ENCODE measurements at regions of chr11 and their contacts with region 1.

Region 1: DNA sequence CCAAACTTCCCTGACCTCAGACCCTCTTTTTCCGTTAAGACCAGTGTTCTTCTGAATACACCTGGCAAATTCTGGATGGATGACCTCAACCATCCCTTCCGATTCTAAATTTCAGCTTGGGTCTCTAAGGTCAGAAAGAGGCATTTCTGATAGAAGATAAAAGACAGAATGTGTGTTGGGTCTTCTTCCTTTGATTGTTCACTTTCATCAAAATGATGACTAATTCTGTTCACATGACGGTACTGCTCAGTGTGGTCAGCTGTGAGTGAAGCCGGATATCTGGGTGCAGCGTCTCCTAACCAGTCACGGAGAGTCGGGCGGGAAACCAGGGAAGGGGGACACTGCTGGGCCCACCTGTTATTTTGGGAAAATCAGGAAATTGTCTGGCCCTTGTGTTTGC is 151.6 kb upstream of the NAV2 start:
- DNase-seq: no peak
- ATAC-seq: no peak

Region 2: GRCh38 chr11:19742588-19743292 is 181.7 kb after region 1 on chr11:
- intact Hi-C with region 1: loop called (anchors 1 kb)
- DNase-seq: peak; percentile 76
- ATAC-seq: peak; percentile 87

Region 3: GRCh38 chr11:19800162-19800561 is 239.2 kb after region 1 on chr11:
- intact Hi-C with region 1: loop called (anchors 2 kb)
- DNase-seq: no peak
- ATAC-seq: no peak

Region 4: DNA sequence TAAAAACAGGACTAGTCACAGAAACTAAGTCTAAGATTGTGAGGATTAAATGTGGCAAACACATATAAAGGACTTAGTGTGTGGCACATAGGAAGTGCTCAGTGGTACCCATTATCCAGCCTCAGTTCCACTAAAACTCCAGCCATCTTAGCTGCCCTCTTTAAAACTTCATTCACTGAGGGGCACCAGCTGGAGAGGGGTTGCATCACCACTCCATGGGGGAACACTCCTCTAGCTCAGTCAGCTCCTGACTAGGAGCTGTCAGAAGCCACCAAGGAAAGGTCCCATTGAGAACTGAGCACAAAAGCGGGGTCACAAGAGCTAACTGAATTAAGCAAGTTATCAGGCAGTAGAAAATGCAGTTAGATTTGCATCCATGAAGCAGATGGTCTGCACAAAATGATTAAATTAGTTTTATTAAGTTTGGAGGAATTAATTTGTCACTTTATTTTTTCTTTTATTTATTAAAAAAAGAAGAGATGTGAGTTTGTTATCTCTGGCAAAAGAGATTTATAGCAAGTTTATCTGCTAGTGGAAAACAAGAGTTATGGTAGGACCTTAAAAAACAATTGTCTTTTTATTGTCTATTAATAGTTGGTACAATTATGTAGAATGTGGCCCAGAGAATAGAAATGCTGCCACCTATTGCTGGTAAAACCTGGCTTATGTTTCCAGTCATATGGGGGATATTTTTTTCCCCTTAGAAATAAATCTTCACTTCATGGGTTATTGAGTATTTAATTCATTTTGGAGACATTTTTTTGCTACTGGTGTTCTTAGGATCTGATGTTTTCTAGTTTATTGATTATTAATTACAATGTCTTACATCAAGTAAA is 247.3 kb after region 1 on chr11:
- intact Hi-C with region 1: loop called (anchors 2 kb)
- DNase-seq: no peak
- ATAC-seq: no peak

Region 5: DNA sequence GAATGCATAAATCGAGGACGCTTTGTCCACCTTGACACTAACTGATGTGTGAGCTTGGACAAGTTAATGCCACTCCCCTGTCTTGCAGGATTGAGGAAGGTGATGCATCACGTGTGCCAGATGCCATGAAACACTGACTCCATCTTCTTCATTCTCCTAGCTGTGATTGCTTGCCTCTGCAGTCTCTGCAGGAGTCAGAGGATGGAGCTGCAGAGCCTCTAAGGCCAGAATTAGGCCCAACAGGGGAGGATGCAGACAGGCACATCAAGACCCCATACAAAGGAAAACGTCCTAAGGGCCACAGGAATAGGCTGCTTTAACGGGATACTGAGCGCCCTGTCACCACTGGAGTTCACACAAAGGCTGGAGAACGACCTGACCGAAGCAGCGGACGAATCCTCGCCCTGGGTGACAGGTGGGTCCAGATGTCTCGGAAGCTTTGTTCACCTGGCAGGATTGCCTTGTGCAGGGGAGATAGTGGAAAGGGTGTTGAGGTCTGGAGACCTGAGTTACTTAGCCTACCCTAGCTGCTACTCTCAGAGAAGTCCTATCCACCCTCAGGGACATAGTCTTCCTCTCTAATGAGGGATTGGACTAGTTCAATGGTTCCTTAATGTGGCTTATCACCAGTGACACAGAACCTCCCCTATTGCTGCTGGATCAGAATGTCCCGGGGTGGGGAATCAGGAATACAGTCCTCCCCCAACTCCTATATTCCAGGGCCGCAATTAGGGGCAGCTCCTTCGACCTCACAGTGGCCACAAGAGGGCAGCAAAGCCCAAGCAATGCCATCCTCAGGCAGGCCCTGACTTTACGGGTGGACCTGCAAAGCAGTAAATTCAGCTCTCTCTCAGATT is 566.9 kb after region 1 on chr11:
- intact Hi-C with region 1: loop called (anchors 5 kb)
- DNase-seq: peak; percentile 82
- ATAC-seq: peak; percentile 68

Region 6: DNA sequence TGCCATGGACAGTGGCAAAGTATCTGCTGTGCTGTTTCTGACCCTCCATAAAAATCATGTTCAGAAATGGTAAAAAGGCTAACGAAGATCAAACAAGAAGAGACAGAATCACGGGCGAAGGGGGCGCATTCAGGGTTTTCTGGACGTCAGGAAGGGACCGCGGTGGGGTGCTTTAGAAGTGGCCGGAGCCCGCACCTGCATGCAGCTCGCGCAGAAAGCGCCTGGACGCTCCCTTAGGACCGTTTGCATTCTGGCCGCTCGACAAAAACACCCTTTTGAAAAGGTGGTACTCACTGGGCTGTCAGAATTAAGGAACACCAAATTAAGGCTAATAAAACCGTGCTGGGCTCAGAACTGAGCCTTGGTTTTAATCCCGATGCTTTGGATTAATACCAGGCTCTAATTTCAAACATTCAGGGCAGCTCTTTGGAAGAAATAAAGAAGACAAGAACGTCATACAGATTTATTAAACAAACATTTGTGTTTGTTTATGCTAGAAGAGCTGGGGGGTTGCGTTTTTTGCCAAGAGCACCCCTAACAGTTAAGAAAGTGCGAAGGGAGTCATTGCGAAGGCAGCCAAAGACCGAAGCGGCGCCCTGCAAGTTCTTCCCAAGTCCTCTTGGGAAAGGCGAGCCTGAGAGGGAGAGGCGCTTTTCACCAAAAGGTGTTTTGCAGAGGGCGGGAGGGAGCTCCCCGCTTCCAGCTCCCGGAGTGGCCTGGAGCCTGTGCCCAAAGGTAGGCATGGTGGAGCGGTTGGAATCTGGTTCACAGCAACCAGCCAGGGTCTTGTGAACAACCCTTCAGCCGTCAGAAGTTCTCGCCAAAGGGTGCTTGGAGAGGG is 647.0 kb after region 1 on chr11:
- intact Hi-C with region 1: no loop called
- DNase-seq: no peak
- ATAC-seq: no peak

Measured in Right ventricle myocardium inferior (tissue), 1 donor.